ENCODE measurements at regions of chrX and their contacts with region 1.

Region 1: DNA sequence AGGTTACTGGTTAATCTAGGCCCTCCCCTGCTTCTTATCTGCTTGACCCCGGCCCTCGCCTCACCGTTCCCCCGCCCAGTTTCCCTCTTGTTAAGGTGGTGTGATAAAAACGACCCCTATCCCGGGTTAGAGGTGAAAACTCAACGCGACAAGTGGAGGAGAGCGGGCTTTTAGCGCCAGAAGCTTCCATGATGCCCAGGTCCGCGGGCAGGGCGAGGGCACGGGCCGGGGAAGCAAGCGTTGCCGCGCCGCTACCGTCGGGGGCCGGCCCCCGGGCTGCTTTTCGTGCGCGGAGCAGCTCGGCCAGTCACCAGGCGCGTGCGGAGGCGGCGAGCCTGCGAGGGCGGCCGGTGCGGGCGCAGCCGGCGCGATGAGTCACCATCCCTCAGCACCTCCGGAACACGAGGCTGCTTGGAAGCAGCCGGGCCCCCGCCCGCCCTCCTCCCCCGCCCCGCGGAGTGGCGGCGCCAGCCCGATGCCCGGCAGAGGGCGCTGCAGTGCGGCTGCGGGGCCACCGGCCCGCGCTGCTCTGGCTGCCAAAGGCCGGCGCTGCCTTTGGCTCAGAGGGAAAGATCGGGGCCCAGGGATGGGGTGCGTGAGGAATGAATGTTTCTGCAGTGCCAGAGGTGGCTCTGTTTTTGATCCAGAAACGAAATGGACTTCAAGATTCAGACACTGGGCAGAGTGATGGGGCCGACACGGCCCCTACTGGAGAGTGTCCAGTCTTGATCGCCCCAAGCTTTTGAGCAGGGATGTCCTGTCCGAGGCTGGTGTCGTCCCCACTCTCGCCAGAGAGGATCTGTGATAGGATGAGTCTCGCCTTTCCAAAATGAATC is 107.8 kb downstream of the NHSL2 start:
- DNase-seq: no peak
- ATAC-seq: peak; percentile 99
- H3K4me3 ChIP-seq: peak overlapping the region; percentile 32 to 41
- H3K27ac ChIP-seq: peak overlapping the region; percentile 75
- H3K4me1 ChIP-seq: no peaks in the 10 kb centered on the region; the same call in 1 of the 2 replicates
- H3K27me3 ChIP-seq: peaks cover 3% of the 10 kb centered on the region
- CTCF ChIP-seq: peak; percentile 94

Region 2: GRCh38 chrX:72003811-72004750 is 14.4 kb before region 1 on chrX:
- CTCF ChIA-PET with region 1: interaction called, 11 read pairs
- POLR2A ChIA-PET with region 1: no interaction called
- in situ Hi-C with region 1: no loop called
- intact Hi-C with region 1: no loop called
- DNase-seq: no peak
- ATAC-seq: 0 out of 2 replicates have a peak, but pooled peaks have one; percentile 63
- H3K4me3 ChIP-seq: no peak overlapping the region
- H3K27ac ChIP-seq: no peak overlapping the region
- H3K4me1 ChIP-seq: no peaks in the 10 kb centered on the region
- H3K27me3 ChIP-seq: no peaks in the 10 kb centered on the region
- CTCF ChIP-seq: peak; percentile 49

Region 3: DNA sequence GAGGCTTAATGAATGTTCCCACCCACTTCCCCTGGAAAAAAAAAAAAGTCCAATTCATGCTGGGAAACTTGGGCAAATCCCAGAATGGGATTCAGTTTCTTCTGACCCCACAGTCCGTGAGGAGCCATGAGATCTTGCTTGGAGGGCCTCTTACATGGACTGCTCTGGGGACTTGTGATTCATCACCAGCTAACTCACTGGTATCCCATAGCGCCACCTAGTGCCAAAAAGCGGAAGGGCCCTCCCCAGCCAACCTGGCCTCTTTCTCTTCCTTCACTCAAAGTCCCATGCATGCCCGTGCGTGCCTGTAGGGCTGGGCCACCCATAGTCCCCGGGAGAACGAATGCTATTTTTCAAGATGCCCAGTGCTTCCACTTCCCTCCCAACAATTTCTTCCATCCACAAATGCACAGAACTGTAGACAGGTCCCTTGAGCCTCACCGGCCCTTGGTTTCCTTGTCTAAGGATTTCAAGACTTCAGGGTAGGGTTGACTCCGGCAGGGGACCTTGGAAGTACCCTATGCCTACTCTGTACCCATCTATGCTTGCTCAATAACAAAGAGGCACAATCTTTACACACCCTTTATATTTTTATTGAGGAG is 108.1 kb after region 1 on chrX:
- CTCF ChIA-PET with region 1: interaction called, 5 read pairs
- POLR2A ChIA-PET with region 1: no interaction called
- in situ Hi-C with region 1: loop called (anchors 5 kb)
- intact Hi-C with region 1: loop called (anchors 1 kb)
- DNase-seq: peak; percentile 69
- ATAC-seq: peak; percentile 91
- H3K4me3 ChIP-seq: no peak overlapping the region
- H3K27ac ChIP-seq: no peak overlapping the region
- H3K4me1 ChIP-seq: no peaks in the 10 kb centered on the region
- H3K27me3 ChIP-seq: no peaks in the 10 kb centered on the region; the same call in 1 of the 2 replicates
- CTCF ChIP-seq: peak; percentile 88

Region 4: DNA sequence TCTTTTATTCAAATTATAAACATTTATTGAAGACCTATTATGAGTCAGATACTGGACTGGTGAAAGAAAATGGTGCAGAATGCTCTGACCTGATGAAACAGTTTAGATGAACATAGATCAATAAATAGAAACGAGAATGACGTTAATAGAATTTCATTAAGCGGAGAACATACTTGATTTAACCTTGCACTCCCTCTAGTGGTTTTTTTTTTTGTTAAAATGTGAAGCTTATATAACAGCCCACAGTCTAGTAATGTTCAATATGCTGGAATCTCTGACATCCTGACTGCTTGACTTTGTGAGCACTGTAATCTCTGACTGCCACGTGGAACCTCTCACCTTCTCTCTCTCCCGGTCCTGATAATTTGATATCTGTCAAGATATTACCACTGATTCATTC is 521.8 kb after region 1 on chrX:
- CTCF ChIA-PET with region 1: no interaction called
- POLR2A ChIA-PET with region 1: no interaction called
- in situ Hi-C with region 1: no loop called
- intact Hi-C with region 1: no loop called
- DNase-seq: no peak
- ATAC-seq: no peak
- H3K4me3 ChIP-seq: no peak overlapping the region
- H3K27ac ChIP-seq: no peak overlapping the region
- H3K4me1 ChIP-seq: no peaks in the 10 kb centered on the region
- H3K27me3 ChIP-seq: no peaks in the 10 kb centered on the region
- CTCF ChIP-seq: peak; percentile 29; the same call in 1 of the 2 replicates